Mucosa of descending colon (tissue), 3 donors: ENCODE measurements at regions of chr5 and their contacts with region 1.

Region 1: DNA sequence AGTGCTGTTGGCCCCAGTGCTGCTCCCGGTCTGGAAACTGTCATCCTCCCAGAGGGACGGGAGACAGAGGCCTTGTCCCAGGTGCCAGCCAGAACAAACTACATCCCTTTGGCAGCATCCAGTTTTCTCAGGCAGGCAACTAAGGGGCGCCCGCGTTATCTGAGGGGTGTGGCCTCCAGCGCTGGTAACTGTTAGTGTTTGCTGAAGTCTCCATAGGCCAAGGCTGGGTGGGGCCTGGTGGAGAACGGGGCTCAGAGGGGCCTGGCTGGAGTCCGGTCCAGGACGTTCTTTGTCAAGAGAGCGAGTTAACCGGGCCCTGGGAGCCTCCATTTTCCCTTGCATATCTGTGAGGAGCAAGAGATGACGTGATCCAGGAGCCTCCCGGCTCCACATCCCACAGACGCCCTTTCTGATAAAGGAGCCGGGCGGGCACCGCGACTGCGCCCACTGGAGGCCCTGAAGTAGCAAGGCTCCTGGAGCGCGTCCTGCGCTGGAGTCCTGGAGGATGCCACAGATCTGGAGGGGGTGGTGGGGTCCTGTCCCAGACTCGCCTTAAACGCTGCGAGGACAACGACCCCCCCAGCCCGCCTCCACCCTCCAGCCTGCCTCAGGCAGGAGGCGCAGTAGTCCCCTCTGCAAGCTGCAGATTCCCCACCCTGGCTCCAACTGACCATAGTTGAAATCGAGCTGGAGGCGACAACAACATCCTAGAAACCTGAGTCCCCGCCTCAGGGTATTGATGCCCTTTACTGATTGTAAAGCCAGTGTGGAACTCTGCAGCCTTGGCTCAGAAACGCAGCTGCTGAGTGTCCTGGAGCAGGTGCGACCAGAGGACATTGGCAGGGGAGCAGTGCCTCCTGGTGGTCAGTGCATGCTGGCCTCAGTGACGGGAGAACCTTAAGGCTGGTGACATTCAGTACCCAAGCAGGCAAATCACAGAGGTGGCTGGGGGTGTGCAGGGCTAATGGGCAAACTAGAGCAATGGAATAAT is 20.8 kb upstream of the ZNF354B start:
- DNase-seq: peak in 2 of 3 donors; percentile 48 to 72
- ATAC-seq: peak; percentile 79
- H3K4me3 ChIP-seq: no peak overlapping the region
- H3K4me1 ChIP-seq: no peaks in the 10 kb centered on the region
- CTCF ChIP-seq: no peak

Region 2: GRCh38 chr5:178706591-178706990 is 132.4 kb before region 1 on chr5:
- intact Hi-C with region 1: no loop called
- DNase-seq: no peak
- ATAC-seq: no peak
- H3K4me3 ChIP-seq: no peak overlapping the region
- H3K4me1 ChIP-seq: no peaks in the 10 kb centered on the region
- CTCF ChIP-seq: no peak

Region 3: DNA sequence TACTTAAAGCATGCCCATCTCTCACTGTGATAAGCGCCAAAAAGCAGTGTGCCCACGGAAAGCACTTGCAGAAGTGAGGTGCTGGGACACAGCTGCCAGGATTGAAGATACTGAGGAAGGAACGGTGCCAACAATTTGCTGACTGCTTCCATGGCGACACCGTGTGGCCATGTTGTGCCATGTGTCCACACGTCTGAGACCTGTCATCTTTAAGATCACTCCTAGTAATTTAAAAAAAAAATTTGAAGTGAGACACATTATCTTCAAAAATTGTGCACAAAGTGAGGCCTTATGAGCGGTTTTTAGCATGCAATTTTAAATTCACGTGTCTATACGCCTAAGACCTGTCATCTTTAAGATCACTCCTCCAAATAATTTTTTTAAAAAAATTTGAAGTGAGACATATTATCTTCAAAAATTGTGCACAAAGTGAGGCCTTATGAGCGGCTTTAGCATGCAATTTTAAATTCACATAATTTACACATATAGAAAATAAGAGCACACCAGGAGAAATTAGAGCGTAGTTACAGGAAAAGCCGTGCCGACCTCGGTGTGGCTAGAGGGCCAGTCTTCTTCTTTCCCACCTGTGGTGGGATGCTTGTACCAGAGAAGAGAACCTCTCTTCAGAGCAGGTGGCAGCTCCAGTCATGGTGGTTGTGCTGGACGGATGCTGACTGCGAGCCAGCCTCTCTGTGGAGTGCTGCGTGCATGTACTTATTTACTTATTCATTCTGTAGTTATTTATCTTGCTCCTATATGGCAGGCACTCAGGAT is 1831.8 kb after region 1 on chr5:
- intact Hi-C with region 1: loop called in 1 of 2 experiments (anchors 10 kb)
- DNase-seq: peak in 2 of 3 donors; percentile 56 to 61
- ATAC-seq: peak; percentile 56
- H3K4me3 ChIP-seq: no peak overlapping the region
- H3K4me1 ChIP-seq: no peaks in the 10 kb centered on the region
- CTCF ChIP-seq: peak; percentile 36